ENCODE measurements at regions of chr14 and their contacts with region 1.

Region 1: GRCh38 chr14:20682435-20683124 is 1.8 kb upstream of the RNASE4 start:
- DNase-seq: peak; percentile 83
- H3K4me3 Mint-ChIP-seq: no peak overlapping the region
- H3K27ac Mint-ChIP-seq: no peak overlapping the region
- H3K4me1 Mint-ChIP-seq: peaks cover 32% of the 10 kb centered on the region
- H3K27me3 Mint-ChIP-seq: no peaks in the 10 kb centered on the region
- CTCF ChIP-seq: no peak

Region 2: GRCh38 chr14:20332788-20333493 is 349.6 kb before region 1 on chr14 and contains the start of gene CCNB1IP1:
- CTCF ChIA-PET with region 1: no interaction called
- intact Hi-C with region 1: loop called (anchors 5 kb)
- DNase-seq: peak; percentile 56
- H3K4me3 Mint-ChIP-seq: peak within 1 kb of the TSS; percentile 93
- H3K27ac Mint-ChIP-seq: peak within 1 kb of the TSS; percentile 85
- H3K4me1 Mint-ChIP-seq: peaks cover 13% of the 10 kb centered on the region
- H3K27me3 Mint-ChIP-seq: no peaks in the 10 kb centered on the region
- CTCF ChIP-seq: no peak
- total RNA-seq, gene CCNB1IP1: 37.3 and 39.0 TPM in 2 replicates

Region 3: DNA sequence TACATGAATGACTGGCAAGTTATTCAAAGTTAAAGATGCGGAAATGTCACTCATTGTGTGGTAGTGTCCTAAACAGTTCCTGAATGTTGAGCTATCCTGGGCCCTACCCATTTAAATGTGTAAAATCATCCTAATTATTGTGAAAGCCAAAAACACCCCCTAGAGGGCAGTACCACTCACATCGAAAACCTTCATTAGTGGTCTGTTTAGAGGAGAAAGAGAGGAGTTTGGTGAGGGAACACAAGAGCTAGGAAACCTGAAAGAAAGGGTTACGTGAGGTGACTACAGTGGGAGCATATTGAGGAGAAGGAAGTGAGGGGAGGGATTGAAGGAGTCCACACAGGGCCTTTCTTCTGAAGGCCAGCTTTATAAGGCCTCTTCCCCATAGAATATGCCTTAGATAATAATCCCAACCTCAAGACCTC is 266.8 kb before region 1 on chr14:
- CTCF ChIA-PET with region 1: interaction called, 3 read pairs
- intact Hi-C with region 1: loop called (anchors 5 kb)
- DNase-seq: peak; percentile 55
- H3K4me3 Mint-ChIP-seq: no peak overlapping the region
- H3K27ac Mint-ChIP-seq: peak overlapping the region; percentile 18
- H3K4me1 Mint-ChIP-seq: peaks cover 36% of the 10 kb centered on the region
- H3K27me3 Mint-ChIP-seq: no peaks in the 10 kb centered on the region
- CTCF ChIP-seq: peak; percentile 30

Region 4: GRCh38 chr14:20624495-20625070 is 58.0 kb before region 1 on chr14:
- CTCF ChIA-PET with region 1: interaction called, 8 read pairs
- intact Hi-C with region 1: loop called (anchors 2 kb)
- DNase-seq: peak; percentile 69
- H3K4me3 Mint-ChIP-seq: peak overlapping the region; percentile 67
- H3K27ac Mint-ChIP-seq: peak overlapping the region; percentile 99
- H3K4me1 Mint-ChIP-seq: peaks cover 38% of the 10 kb centered on the region
- H3K27me3 Mint-ChIP-seq: peaks cover 22% of the 10 kb centered on the region
- CTCF ChIP-seq: no peak

Region 5: GRCh38 chr14:20632682-20633428 is 49.7 kb before region 1 on chr14:
- CTCF ChIA-PET with region 1: interaction called, 7 read pairs
- intact Hi-C with region 1: loop called (anchors 2 kb)
- DNase-seq: peak; percentile 69
- H3K4me3 Mint-ChIP-seq: peak overlapping the region; percentile 67
- H3K27ac Mint-ChIP-seq: peak overlapping the region; percentile 95
- H3K4me1 Mint-ChIP-seq: peaks cover 18% of the 10 kb centered on the region
- H3K27me3 Mint-ChIP-seq: peaks cover 12% of the 10 kb centered on the region
- CTCF ChIP-seq: no peak

Region 6: GRCh38 chr14:20662968-20663732 is 19.4 kb before region 1 on chr14:
- CTCF ChIA-PET with region 1: interaction called, 15 read pairs
- intact Hi-C with region 1: no loop called
- DNase-seq: peak; percentile 76
- H3K4me3 Mint-ChIP-seq: peak overlapping the region; percentile 37
- H3K27ac Mint-ChIP-seq: peak overlapping the region; percentile 59
- H3K4me1 Mint-ChIP-seq: peaks cover 13% of the 10 kb centered on the region
- H3K27me3 Mint-ChIP-seq: peaks cover 35% of the 10 kb centered on the region
- CTCF ChIP-seq: peak; percentile 59

Measured in Calu3 (cell line).